ENCODE measurements at regions of chr5 and their contacts with region 1.

Region 1: GRCh38 chr5:69369369-69370121 is at the starts of genes AK6, RAD17 and TAF9:
- DNase-seq: peak; percentile 89
- ATAC-seq: peak; percentile 96 to 97
- H3K4me3 ChIP-seq: peak within 1 kb of the TSS; percentile 85 to 90 (median 89)
- H3K27ac ChIP-seq: peak within 1 kb of the TSS; percentile 95 to 99 (median 98)
- H3K4me1 ChIP-seq: peaks cover 30 to 32% of the 10 kb centered on the region in 2 donors
- H3K27me3 ChIP-seq: no peaks in the 10 kb centered on the region
- CTCF ChIP-seq: no peak
- POLR2A ChIP-seq: peak; percentile 80 to 81
- total RNA-seq, gene AK6: 24.4 to 49.3 (median 32.5) TPM
- total RNA-seq, gene RAD17: 7.3 to 18.3 (median 11.9) TPM
- total RNA-seq, gene TAF9: 35.3 to 58.6 (median 45.6) TPM

Region 2: DNA sequence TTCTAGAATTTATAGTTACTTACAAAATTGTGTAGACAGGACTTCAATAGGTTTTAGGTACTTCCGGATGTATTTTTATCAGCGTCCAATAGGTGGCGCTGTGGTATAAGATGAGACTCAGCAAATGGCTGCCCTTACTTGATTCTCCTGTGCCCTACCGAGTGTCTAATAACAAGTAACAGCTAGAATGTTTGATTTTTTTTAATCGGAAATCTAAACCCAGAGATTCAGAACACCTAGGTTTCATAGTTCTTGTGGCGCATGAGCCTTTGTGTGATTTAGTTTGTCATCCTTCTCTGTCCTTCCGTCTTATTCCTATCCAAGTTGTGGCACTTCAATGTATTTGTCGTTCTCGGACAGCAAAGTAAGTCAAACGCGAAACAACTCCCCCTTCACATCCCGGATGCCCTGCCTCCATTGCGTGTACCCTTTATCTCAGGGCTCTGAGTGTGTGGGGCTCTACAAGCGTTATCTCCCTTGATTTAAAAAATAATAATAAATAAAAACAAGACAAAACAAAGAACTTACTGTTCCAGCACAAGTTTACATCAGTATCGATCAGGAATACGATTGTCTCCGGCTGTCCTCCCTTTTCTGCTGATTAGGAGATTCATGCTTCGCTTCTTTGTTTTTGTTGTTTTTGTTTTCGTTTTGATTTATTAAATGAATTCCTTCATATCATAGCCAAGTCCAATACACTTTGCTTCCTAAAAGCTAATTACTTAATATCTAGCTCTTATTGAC is 326.5 kb before region 1 on chr5:
- in situ Hi-C with region 1: loop called in 1 of 4 experiments (anchors 10 kb)
- intact Hi-C with region 1: loop called (anchors 2 kb)
- DNase-seq: peak; percentile 61 to 69
- ATAC-seq: peak; percentile 97
- H3K4me3 ChIP-seq: peak overlapping the region; percentile 50 to 69 (median 58)
- H3K27ac ChIP-seq: peak overlapping the region; percentile 65 to 77 (median 68)
- H3K4me1 ChIP-seq: no peaks in the 10 kb centered on the region
- H3K27me3 ChIP-seq: no peaks in the 10 kb centered on the region
- CTCF ChIP-seq: peak; percentile 77 to 85 (median 82)
- POLR2A ChIP-seq: no peak

Region 3: GRCh38 chr5:69105996-69106906 is 263.3 kb before region 1 on chr5:
- in situ Hi-C with region 1: loop called in 1 of 4 experiments (anchors 25 kb)
- intact Hi-C with region 1: no loop called
- DNase-seq: no peak
- ATAC-seq: no peak
- H3K4me3 ChIP-seq: no peak overlapping the region
- H3K27ac ChIP-seq: no peak overlapping the region
- H3K4me1 ChIP-seq: no peaks in the 10 kb centered on the region
- H3K27me3 ChIP-seq: no peaks in the 10 kb centered on the region
- CTCF ChIP-seq: no peak
- POLR2A ChIP-seq: no peak

Region 4: GRCh38 chr5:69217548-69218526 is 151.7 kb before region 1 on chr5:
- in situ Hi-C with region 1: no loop called
- intact Hi-C with region 1: loop called (anchors 1 kb)
- DNase-seq: peak; percentile 96 to 97
- ATAC-seq: peak; percentile 95 to 97
- H3K4me3 ChIP-seq: peak overlapping the region; percentile 95 to 100 (median 99)
- H3K27ac ChIP-seq: peak overlapping the region; percentile 93 to 100 (median 98)
- H3K4me1 ChIP-seq: peaks cover 10% of the 10 kb centered on the region in 2 donors
- H3K27me3 ChIP-seq: no peaks in the 10 kb centered on the region
- CTCF ChIP-seq: peak in 4 of 5 experiments; percentile 42 to 62 (median 51)
- POLR2A ChIP-seq: peak; percentile 92 to 95

Region 5: GRCh38 chr5:69234457-69235268 is 134.9 kb before region 1 on chr5 and contains the start of gene CDK7:
- in situ Hi-C with region 1: no loop called
- intact Hi-C with region 1: loop called (anchors 1 kb)
- DNase-seq: peak; percentile 94 to 95
- ATAC-seq: peak; percentile 98 to 99
- H3K4me3 ChIP-seq: peak within 1 kb of the TSS; percentile 68 to 92 (median 76)
- H3K27ac ChIP-seq: peak within 1 kb of the TSS; percentile 75 to 94 (median 86)
- H3K4me1 ChIP-seq: peaks cover 21 to 25% of the 10 kb centered on the region in 2 donors
- H3K27me3 ChIP-seq: no peaks in the 10 kb centered on the region
- CTCF ChIP-seq: peak in 2 of 5 experiments; percentile 12
- POLR2A ChIP-seq: peak; percentile 57 to 58
- total RNA-seq, gene CDK7: 23.4 to 31.6 (median 28.0) TPM

Region 6: GRCh38 chr5:69334793-69335268 is 34.7 kb before region 1 on chr5:
- in situ Hi-C with region 1: no loop called
- intact Hi-C with region 1: loop called (anchors 2 kb)
- DNase-seq: peak; percentile 60 to 78
- ATAC-seq: peak; percentile 79 to 86
- H3K4me3 ChIP-seq: peak overlapping the region in 2 of 4 donors; percentile 15 to 16
- H3K27ac ChIP-seq: peak overlapping the region; percentile 14 to 68 (median 49)
- H3K4me1 ChIP-seq: peaks cover 8 to 15% of the 10 kb centered on the region in 2 donors
- H3K27me3 ChIP-seq: no peaks in the 10 kb centered on the region
- CTCF ChIP-seq: peak; percentile 46 to 82 (median 72)
- POLR2A ChIP-seq: no peak